Endothelial cell of umbilical vein (primary cell): ENCODE measurements at regions of chr5 and their contacts with region 1.

Region 1: GRCh38 chr5:113336975-113337374 is 97.8 kb downstream of the TSSK1B start:
- DNase-seq: peak; percentile 78
- H3K4me3 ChIP-seq: no peak overlapping the region
- H3K27ac ChIP-seq: no peak overlapping the region
- H3K4me1 ChIP-seq: peaks cover 8% of the 10 kb centered on the region
- H3K27me3 ChIP-seq: no peaks in the 10 kb centered on the region
- CTCF ChIP-seq: peak; percentile 51 to 59
- POLR2A ChIP-seq: no peak

Region 2: GRCh38 chr5:113302120-113302519 is 34.9 kb before region 1 on chr5:
- CTCF ChIA-PET with region 1: no interaction called
- POLR2A ChIA-PET with region 1: no interaction called
- dilution Hi-C with region 1: no loop called
- intact Hi-C with region 1: no loop called
- DNase-seq: no peak
- H3K4me3 ChIP-seq: no peak overlapping the region
- H3K27ac ChIP-seq: no peak overlapping the region
- H3K4me1 ChIP-seq: no peaks in the 10 kb centered on the region
- H3K27me3 ChIP-seq: peaks cover 0 to 2% of the 10 kb centered on the region in 2 experiments
- CTCF ChIP-seq: no peak
- POLR2A ChIP-seq: no peak

Region 3: GRCh38 chr5:113507601-113508000 is 170.6 kb after region 1 on chr5:
- CTCF ChIA-PET with region 1: interaction called, 263 read pairs
- POLR2A ChIA-PET with region 1: interaction called, 4 read pairs
- dilution Hi-C with region 1: no loop called
- intact Hi-C with region 1: loop called (anchors 1 kb)
- DNase-seq: no peak
- H3K4me3 ChIP-seq: no peak overlapping the region
- H3K27ac ChIP-seq: no peak overlapping the region
- H3K4me1 ChIP-seq: no peaks in the 10 kb centered on the region
- H3K27me3 ChIP-seq: peaks cover 18 to 25% of the 10 kb centered on the region in 2 experiments
- CTCF ChIP-seq: no peak
- POLR2A ChIP-seq: no peak

Region 4: GRCh38 chr5:113663880-113664541 is 327.0 kb after region 1 on chr5:
- CTCF ChIA-PET with region 1: no interaction called
- POLR2A ChIA-PET with region 1: no interaction called
- dilution Hi-C with region 1: no loop called
- intact Hi-C with region 1: loop called (anchors 5 kb)
- DNase-seq: peak; percentile 56
- H3K4me3 ChIP-seq: no peak overlapping the region
- H3K27ac ChIP-seq: no peak overlapping the region
- H3K4me1 ChIP-seq: no peaks in the 10 kb centered on the region
- H3K27me3 ChIP-seq: peaks cover 1 to 5% of the 10 kb centered on the region in 2 experiments
- CTCF ChIP-seq: peak; percentile 33 to 44
- POLR2A ChIP-seq: no peak

Region 5: DNA sequence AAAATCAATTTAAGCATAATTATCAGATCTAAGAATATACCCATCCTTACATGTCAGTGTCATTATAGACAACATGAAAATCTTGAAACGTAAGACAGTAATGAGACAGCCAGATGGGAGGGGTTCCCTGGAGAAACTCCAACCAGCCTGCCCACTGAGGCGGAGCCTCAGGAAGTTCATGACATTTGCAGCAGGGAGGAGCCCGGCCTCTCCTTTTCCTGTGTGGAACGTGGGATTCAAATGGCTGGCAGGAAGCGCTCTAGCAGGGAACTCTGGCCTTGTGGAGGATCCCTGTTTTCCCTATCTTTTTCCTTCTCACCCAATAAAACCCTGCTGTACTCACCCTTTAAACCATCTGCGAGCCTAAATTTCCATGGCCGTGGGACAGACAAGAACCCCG is 848.3 kb after region 1 on chr5:
- CTCF ChIA-PET with region 1: no interaction called
- POLR2A ChIA-PET with region 1: no interaction called
- dilution Hi-C with region 1: no loop called
- intact Hi-C with region 1: no loop called
- DNase-seq: peak; percentile 32
- H3K4me3 ChIP-seq: no peak overlapping the region
- H3K27ac ChIP-seq: no peak overlapping the region
- H3K4me1 ChIP-seq: peaks cover 12% of the 10 kb centered on the region
- H3K27me3 ChIP-seq: no peaks in the 10 kb centered on the region
- CTCF ChIP-seq: no peak
- POLR2A ChIP-seq: no peak